PC-3 (cell line): ENCODE measurements at regions of chr3 and their contacts with region 1.

Region 1: GRCh38 chr3:79973917-79974595 is 206.3 kb upstream of the ROBO1 start:
- DNase-seq: peak; percentile 81
- ATAC-seq: peak; percentile 66
- H3K4me3 ChIP-seq: no peak overlapping the region
- H3K27ac ChIP-seq: peak overlapping the region; percentile 74
- H3K4me1 ChIP-seq: peaks cover 37% of the 10 kb centered on the region
- H3K27me3 ChIP-seq: no peaks in the 10 kb centered on the region
- CTCF ChIP-seq: no peak

Region 2: GRCh38 chr3:79534727-79535126 is 439.3 kb before region 1 on chr3:
- CTCF ChIA-PET with region 1: no interaction called
- POLR2A ChIA-PET with region 1: no interaction called
- intact Hi-C with region 1: loop called (anchors 10 kb)
- DNase-seq: peak; percentile 80
- ATAC-seq: peak; percentile 86
- H3K4me3 ChIP-seq: no peak overlapping the region
- H3K27ac ChIP-seq: peak overlapping the region; percentile 67
- H3K4me1 ChIP-seq: peaks cover 46% of the 10 kb centered on the region
- H3K27me3 ChIP-seq: no peaks in the 10 kb centered on the region
- CTCF ChIP-seq: no peak

Region 3: DNA sequence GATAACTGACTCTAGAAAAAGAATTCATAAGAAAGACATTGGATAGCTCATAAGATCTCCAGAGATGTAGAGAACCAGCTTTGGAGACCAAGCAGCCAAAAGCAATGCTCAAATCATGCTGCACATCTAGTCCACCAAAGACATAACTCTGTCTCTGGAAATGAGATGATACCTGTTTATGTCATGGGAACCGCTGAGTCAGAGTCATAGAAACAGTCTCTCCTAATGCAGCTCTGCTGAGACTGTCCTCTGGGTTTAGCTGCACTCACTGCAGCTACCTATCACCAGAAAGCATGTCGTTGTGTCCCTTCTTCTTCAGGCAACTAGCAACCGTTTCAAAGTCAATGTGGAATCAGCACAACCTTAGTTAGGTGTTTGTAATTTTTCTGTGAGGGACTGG is 12.3 kb after region 1 on chr3:
- CTCF ChIA-PET with region 1: no interaction called
- POLR2A ChIA-PET with region 1: interaction called, 14 read pairs
- intact Hi-C with region 1: no loop called
- DNase-seq: no peak
- ATAC-seq: peak; percentile 65; the same call in 1 of the 2 replicates
- H3K4me3 ChIP-seq: no peak overlapping the region
- H3K27ac ChIP-seq: peak overlapping the region; percentile 93
- H3K4me1 ChIP-seq: peaks cover 23% of the 10 kb centered on the region
- H3K27me3 ChIP-seq: no peaks in the 10 kb centered on the region
- CTCF ChIP-seq: no peak